Natural killer cell (primary cell): ENCODE measurements at regions of chr22 and their contacts with region 1.

Region 1: DNA sequence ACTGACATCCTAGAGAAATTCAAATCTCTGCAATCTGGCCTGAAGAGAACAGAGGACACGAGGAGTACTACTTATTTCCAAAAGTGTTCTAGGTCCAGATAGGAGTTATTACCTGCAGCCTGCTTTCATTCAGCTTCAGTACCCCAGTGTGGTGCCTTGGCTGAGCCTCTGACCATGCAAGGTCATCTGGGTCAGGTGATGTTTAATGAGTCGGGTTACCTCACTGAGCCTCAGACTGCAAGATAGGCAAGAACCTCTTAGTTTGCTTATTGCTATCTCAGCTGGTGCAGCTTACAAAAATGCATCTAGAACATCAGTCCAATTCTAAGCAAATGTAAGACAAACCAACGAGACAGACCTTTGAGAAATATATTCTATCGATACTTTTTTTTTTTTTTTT is 9.5 kb upstream of the NF2 start:
- DNase-seq: no peak
- ATAC-seq: no peak
- H3K4me3 ChIP-seq: no peak overlapping the region
- H3K4me3 Mint-ChIP-seq: no peak overlapping the region
- H3K27ac ChIP-seq: no peak overlapping the region
- H3K27ac Mint-ChIP-seq: no peak overlapping the region
- H3K4me1 ChIP-seq: peaks cover 6% of the 10 kb centered on the region
- H3K4me1 Mint-ChIP-seq: peaks cover 6 to 7% of the 10 kb centered on the region in 2 donors
- H3K27me3 ChIP-seq: no peaks in the 10 kb centered on the region
- H3K27me3 Mint-ChIP-seq: no peaks in the 10 kb centered on the region
- CTCF ChIP-seq: no peak

Region 2: GRCh38 chr22:29625090-29625825 is 31.3 kb after region 1 on chr22:
- intact Hi-C with region 1: loop called (anchors 5 kb)
- DNase-seq: peak in 1 of 2 donors; percentile 71
- ATAC-seq: peak in 2 of 3 donors; percentile 58 to 67
- H3K4me3 ChIP-seq: no peak overlapping the region
- H3K4me3 Mint-ChIP-seq: no peak overlapping the region
- H3K27ac ChIP-seq: no peak overlapping the region
- H3K27ac Mint-ChIP-seq: peak overlapping the region; percentile 15 to 32
- H3K4me1 ChIP-seq: peaks cover 5% of the 10 kb centered on the region
- H3K4me1 Mint-ChIP-seq: peaks cover 56 to 62% of the 10 kb centered on the region in 2 donors
- H3K27me3 ChIP-seq: no peaks in the 10 kb centered on the region
- H3K27me3 Mint-ChIP-seq: no peaks in the 10 kb centered on the region
- CTCF ChIP-seq: peak; percentile 97

Region 3: DNA sequence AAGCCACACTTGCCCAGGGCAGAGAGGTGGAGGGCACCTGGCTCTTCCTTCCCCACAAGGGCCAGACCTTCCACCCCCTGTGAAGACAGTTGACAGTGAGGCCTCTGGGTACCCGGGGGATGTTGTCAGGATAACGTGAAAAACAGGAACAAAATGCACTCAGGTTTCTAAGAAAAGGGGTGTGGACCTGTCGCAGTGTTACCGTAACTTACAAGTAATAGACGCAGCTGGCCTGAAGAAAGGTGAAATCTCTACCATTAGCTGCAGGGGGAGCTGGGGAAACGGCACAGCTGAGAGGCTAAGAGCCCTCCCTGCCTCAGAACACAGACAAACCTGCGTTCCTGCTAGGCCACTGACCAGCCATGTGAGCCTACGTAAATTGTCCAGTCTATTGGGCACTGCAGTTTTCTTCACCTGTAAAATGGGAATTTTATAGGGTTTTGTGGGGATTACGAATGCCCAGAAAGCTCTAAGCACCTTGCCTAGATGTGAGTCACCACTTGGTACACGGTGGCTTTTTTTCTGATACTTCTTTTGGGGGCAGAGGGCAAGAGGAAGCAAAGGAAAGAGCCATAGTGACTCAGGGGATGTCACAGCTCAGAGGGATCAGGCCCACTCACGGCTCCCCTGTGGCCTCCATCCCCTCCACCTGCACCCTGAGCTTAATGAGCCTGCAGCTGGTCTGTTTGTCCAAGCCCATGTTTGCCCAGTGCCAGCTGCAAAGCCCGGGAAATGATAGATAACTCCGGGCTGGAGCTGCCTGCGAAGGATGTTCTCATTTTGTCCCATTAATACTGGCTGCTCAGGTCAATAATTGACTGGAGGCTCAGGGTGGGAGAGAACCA is 107.5 kb after region 1 on chr22:
- intact Hi-C with region 1: no loop called
- DNase-seq: peak in 1 of 2 donors; percentile 42
- ATAC-seq: peak in 2 of 3 donors; percentile 16 to 22
- H3K4me3 ChIP-seq: no peak overlapping the region
- H3K4me3 Mint-ChIP-seq: no peak overlapping the region
- H3K27ac ChIP-seq: no peak overlapping the region
- H3K27ac Mint-ChIP-seq: no peak overlapping the region
- H3K4me1 ChIP-seq: peaks cover 3% of the 10 kb centered on the region
- H3K4me1 Mint-ChIP-seq: peaks cover 0 to 10% of the 10 kb centered on the region in 2 donors
- H3K27me3 ChIP-seq: no peaks in the 10 kb centered on the region
- H3K27me3 Mint-ChIP-seq: peaks cover 0 to 9% of the 10 kb centered on the region in 2 donors
- CTCF ChIP-seq: no peak

Region 4: GRCh38 chr22:29713156-29713727 is 119.3 kb after region 1 on chr22:
- intact Hi-C with region 1: no loop called
- DNase-seq: no peak
- ATAC-seq: no peak
- H3K4me3 ChIP-seq: no peak overlapping the region
- H3K4me3 Mint-ChIP-seq: no peak overlapping the region
- H3K27ac ChIP-seq: no peak overlapping the region
- H3K27ac Mint-ChIP-seq: no peak overlapping the region
- H3K4me1 ChIP-seq: no peaks in the 10 kb centered on the region
- H3K4me1 Mint-ChIP-seq: no peaks in the 10 kb centered on the region
- H3K27me3 ChIP-seq: peaks cover 3% of the 10 kb centered on the region
- H3K27me3 Mint-ChIP-seq: peaks cover 11 to 14% of the 10 kb centered on the region in 2 donors
- CTCF ChIP-seq: no peak

Region 5: GRCh38 chr22:30038219-30038618 is 444.3 kb after region 1 on chr22:
- intact Hi-C with region 1: no loop called
- DNase-seq: no peak
- ATAC-seq: no peak
- H3K4me3 ChIP-seq: no peak overlapping the region
- H3K4me3 Mint-ChIP-seq: no peak overlapping the region
- H3K27ac ChIP-seq: no peak overlapping the region
- H3K27ac Mint-ChIP-seq: no peak overlapping the region
- H3K4me1 ChIP-seq: no peaks in the 10 kb centered on the region
- H3K4me1 Mint-ChIP-seq: no peaks in the 10 kb centered on the region
- H3K27me3 ChIP-seq: no peaks in the 10 kb centered on the region
- H3K27me3 Mint-ChIP-seq: peaks cover 0 to 1% of the 10 kb centered on the region in 2 donors
- CTCF ChIP-seq: no peak